Natural killer cell (primary cell): ENCODE measurements at regions of chr11 and their contacts with region 1.

Region 1: DNA sequence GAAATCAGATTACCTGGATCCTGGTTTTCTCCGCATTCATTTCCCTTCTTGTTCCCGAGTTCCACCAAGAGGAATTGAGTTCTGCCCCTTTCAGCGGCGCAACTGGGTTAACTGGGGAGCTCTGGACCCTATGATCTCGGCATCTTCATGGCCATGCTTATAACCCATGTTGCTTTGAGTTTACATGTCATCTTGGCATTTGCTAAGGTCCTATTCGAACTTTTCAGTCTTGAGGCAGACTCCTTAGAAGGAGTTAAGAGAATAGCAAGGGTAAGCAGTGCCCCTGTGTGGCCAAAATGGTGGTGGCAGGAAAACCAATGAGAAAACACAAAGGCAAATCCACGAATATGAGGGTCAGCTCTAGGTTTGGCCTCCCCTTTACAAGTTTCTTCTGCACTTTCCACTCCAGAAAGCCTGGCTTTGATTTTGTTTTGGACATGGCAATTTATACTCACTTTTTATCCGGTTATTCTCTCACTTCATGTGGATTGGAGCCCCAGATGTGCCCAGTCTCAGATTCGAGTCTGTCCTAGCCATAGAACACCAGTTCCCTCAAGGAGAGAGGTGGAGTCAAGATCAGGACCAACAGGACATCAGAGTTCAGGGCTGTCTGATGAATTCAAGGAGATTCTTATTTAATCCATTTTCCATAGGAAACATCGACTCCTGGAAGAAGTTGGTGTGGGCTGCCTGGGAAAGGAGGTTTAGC is 55.3 kb upstream of the FBXO3 start:
- DNase-seq: peak in 1 of 2 donors; percentile 79
- ATAC-seq: peak; percentile 55 to 74 (median 64)
- H3K4me3 ChIP-seq: no peak overlapping the region
- H3K4me3 Mint-ChIP-seq: peak overlapping the region; percentile 77
- H3K27ac ChIP-seq: no peak overlapping the region
- H3K27ac Mint-ChIP-seq: no peak overlapping the region
- H3K4me1 ChIP-seq: peaks cover 10% of the 10 kb centered on the region
- H3K4me1 Mint-ChIP-seq: peaks cover 5 to 6% of the 10 kb centered on the region in 2 donors
- H3K27me3 ChIP-seq: peaks cover 25% of the 10 kb centered on the region
- H3K27me3 Mint-ChIP-seq: peaks cover 41 to 53% of the 10 kb centered on the region in 2 donors
- CTCF ChIP-seq: peak; percentile 40

Region 2: DNA sequence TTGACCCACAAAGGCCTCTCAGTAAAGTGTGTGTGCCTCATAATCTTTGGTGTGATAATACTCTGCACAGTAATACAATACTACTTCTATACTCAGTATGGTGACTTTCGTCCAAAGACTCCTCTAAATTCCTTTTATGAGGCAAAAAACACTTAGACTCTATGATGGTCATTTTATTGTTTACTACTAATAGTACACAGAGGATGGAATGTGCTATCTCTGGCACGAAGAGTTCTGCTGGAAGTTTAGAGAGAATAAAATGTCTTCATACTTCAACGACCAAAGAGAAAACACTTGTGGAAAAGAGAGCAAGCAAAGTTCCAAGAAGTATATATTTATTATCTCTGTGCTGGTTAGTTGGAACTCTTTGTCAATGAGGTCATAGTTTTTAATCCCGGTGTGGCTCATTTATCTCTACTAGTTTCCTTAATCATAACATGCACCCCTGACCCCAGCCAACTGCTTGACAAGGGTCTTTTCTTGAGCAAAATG is 660.8 kb before region 1 on chr11:
- intact Hi-C with region 1: loop called (anchors 5 kb)
- DNase-seq: no peak
- ATAC-seq: no peak
- H3K4me3 ChIP-seq: no peak overlapping the region
- H3K4me3 Mint-ChIP-seq: no peak overlapping the region
- H3K27ac ChIP-seq: no peak overlapping the region
- H3K27ac Mint-ChIP-seq: no peak overlapping the region
- H3K4me1 ChIP-seq: no peaks in the 10 kb centered on the region
- H3K4me1 Mint-ChIP-seq: no peaks in the 10 kb centered on the region
- H3K27me3 ChIP-seq: no peaks in the 10 kb centered on the region
- H3K27me3 Mint-ChIP-seq: no peaks in the 10 kb centered on the region
- CTCF ChIP-seq: no peak

Region 3: DNA sequence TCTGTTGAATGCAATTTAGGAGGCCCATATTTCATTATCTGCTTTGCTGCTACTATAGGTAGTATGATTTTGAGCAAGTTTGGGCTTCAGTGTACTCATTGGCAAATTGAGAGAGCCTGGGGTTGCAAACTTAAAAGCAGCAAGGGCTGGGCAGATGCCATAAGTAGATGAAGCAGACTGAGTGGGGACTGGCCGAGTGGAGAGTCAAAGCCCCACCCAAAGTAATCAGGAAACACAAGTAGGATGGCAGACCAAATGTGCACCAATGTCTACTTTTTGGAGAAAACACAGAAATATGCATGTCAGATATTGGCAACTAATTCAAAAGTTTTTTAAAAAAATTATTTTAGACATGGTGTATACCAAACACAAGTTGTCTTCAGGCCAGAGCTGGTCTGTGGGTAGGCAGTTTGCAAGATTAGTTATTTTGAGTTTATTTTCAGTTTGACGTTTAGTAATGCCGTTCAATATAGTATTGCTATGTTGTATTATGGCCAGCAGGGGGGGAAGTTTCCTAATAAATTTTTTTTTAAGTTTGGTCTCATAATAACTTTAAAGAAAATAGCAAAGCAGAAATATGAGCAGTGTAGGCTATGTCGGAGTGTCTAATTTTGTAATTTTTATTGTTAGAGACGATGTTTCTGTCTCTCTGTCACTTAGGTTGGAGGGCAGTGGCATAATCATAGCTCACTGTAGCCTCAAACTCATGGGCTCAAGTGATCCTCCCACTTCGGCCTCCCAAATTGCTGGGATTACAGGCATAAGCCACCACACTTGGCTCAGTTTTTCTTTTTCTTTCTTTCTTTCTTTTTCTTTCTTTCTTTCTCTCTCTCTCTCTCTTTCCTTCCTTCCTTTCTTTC is 467.3 kb before region 1 on chr11:
- intact Hi-C with region 1: loop called (anchors 1 kb)
- DNase-seq: peak in 1 of 2 donors; percentile 72
- ATAC-seq: peak; percentile 68 to 78 (median 71)
- H3K4me3 ChIP-seq: no peak overlapping the region
- H3K4me3 Mint-ChIP-seq: no peak overlapping the region
- H3K27ac ChIP-seq: no peak overlapping the region
- H3K27ac Mint-ChIP-seq: no peak overlapping the region
- H3K4me1 ChIP-seq: peaks cover 4% of the 10 kb centered on the region
- H3K4me1 Mint-ChIP-seq: peaks cover 0 to 7% of the 10 kb centered on the region in 2 donors
- H3K27me3 ChIP-seq: peaks cover 4% of the 10 kb centered on the region
- H3K27me3 Mint-ChIP-seq: peaks cover 12 to 15% of the 10 kb centered on the region in 2 donors
- CTCF ChIP-seq: peak; percentile 67

Region 4: GRCh38 chr11:33847251-33847650 is 17.7 kb after region 1 on chr11:
- intact Hi-C with region 1: no loop called
- DNase-seq: no peak
- ATAC-seq: no peak
- H3K4me3 ChIP-seq: no peak overlapping the region
- H3K4me3 Mint-ChIP-seq: no peak overlapping the region
- H3K27ac ChIP-seq: no peak overlapping the region
- H3K27ac Mint-ChIP-seq: no peak overlapping the region
- H3K4me1 ChIP-seq: no peaks in the 10 kb centered on the region
- H3K4me1 Mint-ChIP-seq: no peaks in the 10 kb centered on the region
- H3K27me3 ChIP-seq: no peaks in the 10 kb centered on the region
- H3K27me3 Mint-ChIP-seq: peaks cover 17 to 45% of the 10 kb centered on the region in 2 donors
- CTCF ChIP-seq: no peak